ENCODE measurements at regions of chr17 and their contacts with region 1.

Region 1: GRCh38 chr17:39209317-39210092 is 9.4 kb downstream of the RPL19 start:
- DNase-seq: peak; percentile 88
- H3K4me3 Mint-ChIP-seq: peak overlapping the region; percentile 68
- H3K27ac Mint-ChIP-seq: peak overlapping the region; percentile 61
- H3K4me1 Mint-ChIP-seq: peaks cover 20% of the 10 kb centered on the region
- H3K27me3 Mint-ChIP-seq: peaks cover 13% of the 10 kb centered on the region

Region 2: DNA sequence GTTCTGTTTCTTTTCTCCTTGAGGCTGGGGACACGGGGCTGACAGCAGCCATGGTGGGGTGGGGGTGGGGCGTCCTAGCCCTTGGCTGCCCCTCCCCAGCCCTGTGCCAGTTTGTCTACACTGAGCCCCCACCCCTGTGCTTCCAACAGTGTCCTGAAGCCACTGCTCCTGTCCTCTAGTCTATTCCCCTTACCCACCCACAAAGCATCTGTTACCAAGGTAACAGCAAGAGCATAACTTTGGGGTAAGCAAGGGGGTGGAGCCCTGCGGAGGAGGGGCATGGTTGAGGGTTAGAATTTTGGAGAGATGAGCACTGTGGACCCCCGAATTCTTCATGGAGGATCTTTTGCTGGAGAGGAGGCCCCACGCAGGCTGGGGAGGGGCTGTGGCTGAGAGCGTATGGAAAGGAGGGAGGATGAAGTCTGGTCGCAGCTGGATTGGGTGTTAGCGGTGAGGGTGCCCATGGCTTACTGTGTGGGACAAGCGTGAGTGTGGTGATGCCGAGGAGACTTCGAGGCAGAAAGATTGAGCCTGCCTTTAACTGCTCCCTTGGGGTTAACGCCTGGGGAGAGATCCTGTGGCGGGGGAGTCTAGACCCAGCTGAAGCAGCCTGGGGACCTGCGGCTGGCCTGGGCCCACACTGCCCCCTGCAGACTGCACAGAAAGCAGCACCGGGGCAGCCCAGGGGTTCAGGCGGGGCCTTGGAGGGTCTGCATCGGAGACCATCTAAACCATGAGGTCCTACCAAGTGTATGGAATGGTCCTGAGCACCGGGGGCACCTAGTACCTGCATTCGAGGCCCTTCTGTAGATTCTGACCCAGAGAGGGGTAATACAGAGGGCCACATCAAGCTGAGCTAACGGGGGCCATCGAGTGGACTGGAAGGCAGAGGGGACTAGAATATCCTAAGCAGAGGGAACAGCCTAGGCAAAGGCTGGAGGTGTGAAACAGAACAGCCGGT is 22.4 kb after region 1 on chr17:
- intact Hi-C with region 1: loop called (anchors 1 kb)
- DNase-seq: peak; percentile 84
- H3K4me3 Mint-ChIP-seq: peak overlapping the region; percentile 43
- H3K27ac Mint-ChIP-seq: no peak overlapping the region
- H3K4me1 Mint-ChIP-seq: peaks cover 8% of the 10 kb centered on the region
- H3K27me3 Mint-ChIP-seq: peaks cover 31% of the 10 kb centered on the region

Region 3: DNA sequence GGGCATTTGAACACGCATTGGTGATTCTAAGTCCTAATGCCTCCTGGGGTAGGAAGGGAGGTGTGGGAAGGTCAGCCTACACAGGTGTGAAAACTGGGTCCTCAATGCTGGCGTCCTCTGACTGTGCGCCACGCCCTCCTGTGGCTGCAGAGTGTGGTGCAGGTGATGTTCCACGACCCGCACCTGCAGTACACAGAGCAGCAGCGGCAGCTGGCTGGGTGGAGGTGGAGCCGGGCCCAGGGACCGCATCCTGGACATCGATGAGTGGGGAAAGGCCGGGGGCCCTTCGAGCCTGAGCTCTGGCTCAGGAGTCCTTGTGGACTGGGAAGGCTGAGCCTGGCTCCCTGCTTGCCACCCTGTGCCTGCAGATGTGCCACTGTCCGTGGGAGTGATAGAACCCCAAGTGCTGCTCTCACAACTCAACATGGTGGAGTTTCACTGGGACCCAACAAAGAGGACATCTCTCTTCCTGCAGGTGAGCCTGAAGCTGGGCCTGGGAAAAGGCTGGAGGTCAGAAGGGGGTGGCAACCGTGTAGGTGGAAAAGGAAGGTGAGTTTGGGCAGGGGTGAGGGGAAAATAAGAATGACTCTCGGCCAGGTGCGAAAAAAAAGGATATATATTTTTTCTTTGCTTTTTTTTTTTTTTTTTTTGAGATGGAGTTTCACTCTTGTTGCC is 30.3 kb after region 1 on chr17:
- intact Hi-C with region 1: loop called (anchors 1 kb)
- DNase-seq: peak; percentile 90
- H3K4me3 Mint-ChIP-seq: no peak overlapping the region
- H3K27ac Mint-ChIP-seq: no peak overlapping the region
- H3K4me1 Mint-ChIP-seq: peaks cover 17% of the 10 kb centered on the region
- H3K27me3 Mint-ChIP-seq: no peaks in the 10 kb centered on the region

Region 4: GRCh38 chr17:39244600-39245570 is 35.4 kb after region 1 on chr17:
- intact Hi-C with region 1: loop called (anchors 1 kb)
- DNase-seq: peak; percentile 95
- H3K4me3 Mint-ChIP-seq: no peak overlapping the region
- H3K27ac Mint-ChIP-seq: no peak overlapping the region
- H3K4me1 Mint-ChIP-seq: peaks cover 4% of the 10 kb centered on the region
- H3K27me3 Mint-ChIP-seq: no peaks in the 10 kb centered on the region

Region 5: DNA sequence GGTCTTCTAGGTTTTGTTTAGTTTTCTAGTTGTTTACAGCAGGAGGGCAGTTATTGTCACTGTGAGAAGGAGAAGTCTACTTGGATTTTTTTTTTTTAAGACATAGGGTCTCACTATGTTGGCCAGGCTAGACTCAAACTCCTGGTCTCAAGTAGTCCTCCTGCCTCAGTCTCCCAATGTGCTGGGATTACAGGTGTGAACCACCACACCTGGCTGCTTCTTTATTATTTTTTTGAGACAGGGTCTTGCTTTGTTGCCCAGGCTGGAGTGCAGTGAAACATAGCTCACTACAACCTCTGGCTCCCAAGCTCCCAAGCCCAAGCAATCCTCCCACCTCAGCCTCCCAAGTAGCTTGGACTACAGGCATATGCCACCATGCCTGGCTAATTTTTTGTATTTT is 84.6 kb after region 1 on chr17:
- intact Hi-C with region 1: no loop called
- DNase-seq: no peak
- H3K4me3 Mint-ChIP-seq: no peak overlapping the region
- H3K27ac Mint-ChIP-seq: no peak overlapping the region
- H3K4me1 Mint-ChIP-seq: no peaks in the 10 kb centered on the region
- H3K27me3 Mint-ChIP-seq: no peaks in the 10 kb centered on the region

Region 6: GRCh38 chr17:39461113-39461925 is 251.8 kb after region 1 on chr17 and contains the start of gene CDK12:
- intact Hi-C with region 1: loop called (anchors 5 kb)
- DNase-seq: peak; percentile 98
- H3K4me3 Mint-ChIP-seq: peak within 1 kb of the TSS; percentile 87
- H3K27ac Mint-ChIP-seq: peak within 1 kb of the TSS; percentile 94
- H3K4me1 Mint-ChIP-seq: peaks cover 29% of the 10 kb centered on the region
- H3K27me3 Mint-ChIP-seq: no peaks in the 10 kb centered on the region
- total RNA-seq, gene CDK12: 89.1 and 90.4 TPM in 2 replicates